Activated B cell treated with CpG ODN at 0.5 μM for 24 hours (primary cell): ENCODE measurements at regions of chr17 and their contacts with region 1.

Region 1: DNA sequence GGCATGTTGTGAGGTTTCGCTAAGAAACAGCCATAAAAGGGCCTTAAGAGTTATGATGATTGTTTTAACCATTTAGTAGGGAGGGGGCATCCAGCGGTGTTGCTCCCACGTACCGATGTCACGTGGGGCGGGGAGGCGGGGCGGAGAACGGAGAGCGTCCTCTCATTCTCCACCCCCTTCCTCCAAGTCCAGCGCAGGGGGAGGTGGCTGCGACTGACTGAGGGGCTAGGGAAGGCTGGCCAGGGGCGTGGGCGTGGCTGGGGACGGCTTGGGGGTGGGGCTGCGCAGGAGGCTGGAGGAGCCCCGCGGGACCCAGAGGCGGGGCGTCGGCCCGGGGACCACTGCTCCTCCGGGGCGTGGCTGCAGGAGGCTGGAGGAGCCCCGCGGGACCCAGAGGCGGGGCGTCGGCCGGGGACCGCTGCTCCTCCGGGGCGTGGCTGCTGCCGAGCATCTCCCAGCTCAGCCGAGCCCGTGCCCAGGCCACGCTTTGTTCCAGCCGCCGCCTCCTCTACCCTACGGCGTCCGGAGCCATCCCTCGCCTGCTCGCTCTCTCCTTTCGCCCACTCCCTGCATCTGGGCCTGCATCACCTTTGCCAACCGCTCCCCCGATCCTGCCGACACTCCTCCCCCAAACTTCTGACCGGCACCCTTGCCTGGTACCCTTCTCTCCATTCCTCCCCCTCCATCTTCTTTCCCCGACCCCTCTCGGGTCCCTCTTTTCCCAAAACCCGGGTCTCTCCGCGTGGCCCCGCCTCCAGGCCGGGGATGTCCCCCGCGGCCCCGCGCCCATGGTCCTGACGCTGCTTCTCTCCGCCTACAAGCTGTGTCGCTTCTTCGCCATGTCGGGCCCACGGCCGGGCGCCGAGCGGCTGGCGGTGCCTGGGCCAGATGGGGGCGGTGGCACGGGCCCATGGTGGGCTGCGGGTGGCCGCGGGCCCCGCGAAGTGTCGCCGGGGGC is at the start of gene SARM1:
- DNase-seq: peak; percentile 82
- ATAC-seq: peak; percentile 90
- H3K4me3 Mint-ChIP-seq: peak within 1 kb of the TSS; percentile 94
- H3K27ac Mint-ChIP-seq: peak within 1 kb of the TSS; percentile 85
- H3K4me1 Mint-ChIP-seq: peaks cover 23% of the 10 kb centered on the region
- H3K27me3 Mint-ChIP-seq: no peaks in the 10 kb centered on the region
- CTCF ChIP-seq: no peak
- total RNA-seq, gene SARM1: 15.0 and 19.9 TPM in 2 replicates

Region 2: DNA sequence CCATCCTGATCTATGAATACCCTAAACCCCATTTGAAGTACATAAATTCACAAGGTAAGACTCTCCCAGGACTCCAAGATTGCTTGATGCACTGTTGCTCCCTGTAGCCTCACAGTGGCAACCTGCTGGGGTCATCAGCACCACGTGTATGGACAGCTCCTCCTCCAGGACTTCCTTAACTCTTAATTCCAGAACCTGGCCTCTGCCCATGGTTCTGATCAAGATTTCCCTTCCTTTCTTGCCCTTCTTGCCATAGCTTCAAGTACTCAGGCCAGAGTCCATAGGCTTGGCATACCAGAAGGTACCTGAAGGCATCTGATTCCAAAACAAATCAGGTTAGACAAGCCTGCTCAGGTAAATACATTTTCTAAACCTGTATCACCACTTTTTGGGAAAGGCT is 363.0 kb before region 1 on chr17:
- CTCF ChIA-PET with region 1: no interaction called
- POLR2A ChIA-PET with region 1: no interaction called
- intact Hi-C with region 1: no loop called
- DNase-seq: no peak
- ATAC-seq: no peak
- H3K4me3 Mint-ChIP-seq: no peak overlapping the region
- H3K27ac Mint-ChIP-seq: no peak overlapping the region
- H3K4me1 Mint-ChIP-seq: no peaks in the 10 kb centered on the region
- H3K27me3 Mint-ChIP-seq: peaks cover 3% of the 10 kb centered on the region
- CTCF ChIP-seq: no peak

Region 3: DNA sequence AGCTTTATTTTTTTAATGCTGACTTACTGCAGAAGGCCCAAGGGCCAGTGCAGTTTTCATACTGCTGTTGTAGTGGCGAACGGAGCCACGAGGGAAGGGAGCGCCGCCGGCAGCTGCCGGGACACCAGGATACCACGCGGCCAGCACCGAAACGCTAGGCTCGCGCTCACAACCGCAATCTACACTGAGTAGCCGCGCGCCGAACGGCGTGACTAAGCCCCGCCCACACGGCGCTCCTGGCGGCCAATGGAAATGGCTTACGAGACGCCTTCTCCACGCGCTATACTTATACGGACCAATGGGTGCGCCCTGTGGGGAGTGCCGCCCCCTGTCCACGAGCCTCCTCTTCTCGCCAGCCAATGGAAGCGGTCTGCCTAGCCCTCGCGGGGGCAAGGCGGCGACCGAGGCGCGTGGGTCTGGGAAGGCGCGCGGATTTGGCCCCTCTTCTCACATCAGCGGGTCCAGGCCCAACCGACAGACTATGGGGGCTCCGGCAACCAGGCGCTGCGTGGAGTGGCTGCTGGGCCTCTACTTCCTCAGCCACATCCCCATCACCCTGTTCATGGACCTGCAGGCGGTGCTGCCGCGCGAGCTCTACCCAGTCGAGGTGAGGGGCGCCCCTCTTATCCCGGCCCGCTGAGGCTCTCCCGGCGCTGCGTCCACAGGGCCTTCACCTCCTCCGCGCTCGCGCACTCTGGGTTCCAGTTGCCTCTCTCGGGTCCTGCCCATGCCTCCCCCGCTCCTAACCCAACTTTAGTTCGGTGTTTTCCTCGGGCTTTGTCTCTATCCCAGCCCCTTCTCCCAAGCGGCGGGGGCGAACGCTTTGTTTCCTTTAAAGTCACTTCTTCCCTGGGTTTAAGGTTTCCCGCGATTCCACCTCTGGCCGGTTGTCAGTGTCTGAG is 52.5 kb before region 1 on chr17 and contains the start of gene TMEM97:
- CTCF ChIA-PET with region 1: no interaction called
- POLR2A ChIA-PET with region 1: no interaction called
- intact Hi-C with region 1: loop called (anchors 5 kb)
- DNase-seq: peak; percentile 85
- ATAC-seq: peak; percentile 98
- H3K4me3 Mint-ChIP-seq: peak within 1 kb of the TSS; percentile 90
- H3K27ac Mint-ChIP-seq: peak within 1 kb of the TSS; percentile 76
- H3K4me1 Mint-ChIP-seq: peaks cover 25% of the 10 kb centered on the region
- H3K27me3 Mint-ChIP-seq: no peaks in the 10 kb centered on the region
- CTCF ChIP-seq: no peak
- total RNA-seq, gene TMEM97: 16.1 and 17.6 TPM in 2 replicates

Region 4: GRCh38 chr17:28405632-28406472 is 34.3 kb after region 1 on chr17 and contains the start of gene SLC46A1:
- CTCF ChIA-PET with region 1: no interaction called
- POLR2A ChIA-PET with region 1: interaction called, 7 read pairs
- intact Hi-C with region 1: loop called (anchors 1 kb)
- DNase-seq: peak; percentile 52
- ATAC-seq: peak; percentile 88
- H3K4me3 Mint-ChIP-seq: peak within 1 kb of the TSS; percentile 83
- H3K27ac Mint-ChIP-seq: peak within 1 kb of the TSS; percentile 41
- H3K4me1 Mint-ChIP-seq: peaks cover 8% of the 10 kb centered on the region
- H3K27me3 Mint-ChIP-seq: peaks cover 4% of the 10 kb centered on the region
- CTCF ChIP-seq: no peak
- total RNA-seq, gene SLC46A1: 1.5 and 2.1 TPM in 2 replicates